Activated CD4-positive, alpha-beta T cell treated with anti-CD3 and anti-CD28 coated beads, Interleukin-2, amount 10 ng/mL, durations not matched to agents 24 days and 14 days (primary cell): ENCODE measurements at regions of chr5 and their contacts with region 1.

Region 1: GRCh38 chr5:170420780-170421412 is 31.7 kb upstream of the KCNMB1 start:
- DNase-seq: peak; percentile 85
- H3K4me3 Mint-ChIP-seq: no peak overlapping the region
- H3K27ac Mint-ChIP-seq: no peak overlapping the region
- H3K4me1 Mint-ChIP-seq: peaks cover 6% of the 10 kb centered on the region
- H3K27me3 Mint-ChIP-seq: peaks cover 26% of the 10 kb centered on the region

Region 2: GRCh38 chr5:170338933-170339779 is 81.7 kb before region 1 on chr5:
- intact Hi-C with region 1: loop called (anchors 5 kb)
- DNase-seq: peak; percentile 88
- H3K4me3 Mint-ChIP-seq: no peak overlapping the region
- H3K27ac Mint-ChIP-seq: peak overlapping the region; percentile 55
- H3K4me1 Mint-ChIP-seq: peaks cover 39% of the 10 kb centered on the region
- H3K27me3 Mint-ChIP-seq: no peaks in the 10 kb centered on the region

Region 3: DNA sequence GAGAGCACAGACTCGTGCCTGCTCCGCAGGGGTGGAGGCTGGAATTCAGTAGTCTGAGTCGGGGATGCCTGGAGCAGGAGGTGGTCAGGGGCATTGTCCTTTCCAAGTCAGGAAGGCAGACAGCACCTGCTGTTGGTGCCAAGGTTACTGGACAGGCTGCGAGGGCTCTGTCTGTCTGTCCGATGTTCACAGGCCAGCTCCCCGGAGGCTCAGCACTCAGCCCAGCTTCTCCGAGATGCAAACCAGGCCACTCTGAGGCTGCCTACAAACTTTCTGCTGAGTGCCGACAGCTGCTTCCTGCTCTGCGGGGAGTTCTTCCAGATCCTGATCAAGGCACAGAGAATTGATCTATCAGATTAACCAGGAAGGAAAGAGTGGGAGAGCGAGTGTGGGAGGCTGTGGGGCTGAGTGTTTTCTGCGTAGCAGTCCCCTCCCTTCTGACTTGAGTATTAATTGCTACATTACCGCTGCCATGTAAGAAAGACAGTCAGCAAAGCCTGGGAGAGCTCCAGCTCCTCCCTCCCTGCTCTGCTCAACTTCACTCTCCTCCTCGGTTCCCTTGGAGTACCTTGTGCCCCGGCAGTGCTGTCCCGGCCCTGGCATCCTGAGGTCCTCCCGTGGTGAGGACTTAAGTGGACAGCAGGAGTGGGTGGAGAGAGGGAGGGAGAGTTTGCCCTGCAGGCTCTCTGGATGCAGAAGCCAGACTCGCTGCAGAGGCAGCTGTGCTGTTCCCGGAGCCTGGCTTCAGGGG is 67.7 kb before region 1 on chr5:
- intact Hi-C with region 1: loop called (anchors 5 kb)
- DNase-seq: no peak
- H3K4me3 Mint-ChIP-seq: no peak overlapping the region
- H3K27ac Mint-ChIP-seq: no peak overlapping the region
- H3K4me1 Mint-ChIP-seq: peaks cover 2% of the 10 kb centered on the region
- H3K27me3 Mint-ChIP-seq: peaks cover 54% of the 10 kb centered on the region

Region 4: GRCh38 chr5:170363671-170364070 is 57.2 kb before region 1 on chr5:
- intact Hi-C with region 1: no loop called
- DNase-seq: no peak
- H3K4me3 Mint-ChIP-seq: no peak overlapping the region
- H3K27ac Mint-ChIP-seq: no peak overlapping the region
- H3K4me1 Mint-ChIP-seq: no peaks in the 10 kb centered on the region
- H3K27me3 Mint-ChIP-seq: peaks cover 7% of the 10 kb centered on the region

Region 5: DNA sequence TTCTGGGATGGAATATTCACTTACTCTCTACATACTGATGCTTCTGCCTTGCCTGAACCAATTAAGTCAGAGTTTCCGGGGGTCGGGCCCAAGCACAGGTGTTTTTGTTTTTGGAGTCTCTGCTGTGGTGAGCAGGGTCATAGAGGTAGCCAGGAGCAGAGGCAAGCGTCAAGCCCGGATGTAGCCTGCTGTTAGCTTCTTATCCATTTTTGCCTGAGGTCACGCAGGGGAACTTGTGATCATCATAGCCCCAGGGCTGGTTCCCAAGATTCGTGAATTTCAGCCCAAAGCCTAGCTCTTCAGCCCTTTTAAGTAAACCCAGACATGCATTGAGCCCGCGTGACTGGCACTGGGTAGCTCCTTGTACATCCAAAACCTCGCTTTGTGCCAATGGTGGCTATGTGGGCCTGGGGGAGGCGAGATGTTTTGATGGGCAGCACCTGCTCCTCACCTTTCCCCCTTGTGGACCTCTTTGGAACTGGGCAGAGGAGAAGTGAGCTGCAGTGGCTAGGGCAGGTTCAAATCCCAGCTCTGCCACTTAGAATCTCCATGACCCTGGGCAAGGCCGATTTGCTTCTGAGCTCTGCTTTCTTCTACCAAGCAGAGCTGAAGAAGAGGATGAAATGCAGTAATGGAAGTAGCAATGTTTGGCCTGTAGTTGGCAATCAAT is 1032.3 kb after region 1 on chr5:
- intact Hi-C with region 1: no loop called
- DNase-seq: no peak
- H3K4me3 Mint-ChIP-seq: no peak overlapping the region
- H3K27ac Mint-ChIP-seq: no peak overlapping the region
- H3K4me1 Mint-ChIP-seq: peaks cover 2% of the 10 kb centered on the region
- H3K27me3 Mint-ChIP-seq: peaks cover 37% of the 10 kb centered on the region